CD8-positive, alpha-beta T cell (primary cell): ENCODE measurements at regions of chr12 and their contacts with region 1.

Region 1: DNA sequence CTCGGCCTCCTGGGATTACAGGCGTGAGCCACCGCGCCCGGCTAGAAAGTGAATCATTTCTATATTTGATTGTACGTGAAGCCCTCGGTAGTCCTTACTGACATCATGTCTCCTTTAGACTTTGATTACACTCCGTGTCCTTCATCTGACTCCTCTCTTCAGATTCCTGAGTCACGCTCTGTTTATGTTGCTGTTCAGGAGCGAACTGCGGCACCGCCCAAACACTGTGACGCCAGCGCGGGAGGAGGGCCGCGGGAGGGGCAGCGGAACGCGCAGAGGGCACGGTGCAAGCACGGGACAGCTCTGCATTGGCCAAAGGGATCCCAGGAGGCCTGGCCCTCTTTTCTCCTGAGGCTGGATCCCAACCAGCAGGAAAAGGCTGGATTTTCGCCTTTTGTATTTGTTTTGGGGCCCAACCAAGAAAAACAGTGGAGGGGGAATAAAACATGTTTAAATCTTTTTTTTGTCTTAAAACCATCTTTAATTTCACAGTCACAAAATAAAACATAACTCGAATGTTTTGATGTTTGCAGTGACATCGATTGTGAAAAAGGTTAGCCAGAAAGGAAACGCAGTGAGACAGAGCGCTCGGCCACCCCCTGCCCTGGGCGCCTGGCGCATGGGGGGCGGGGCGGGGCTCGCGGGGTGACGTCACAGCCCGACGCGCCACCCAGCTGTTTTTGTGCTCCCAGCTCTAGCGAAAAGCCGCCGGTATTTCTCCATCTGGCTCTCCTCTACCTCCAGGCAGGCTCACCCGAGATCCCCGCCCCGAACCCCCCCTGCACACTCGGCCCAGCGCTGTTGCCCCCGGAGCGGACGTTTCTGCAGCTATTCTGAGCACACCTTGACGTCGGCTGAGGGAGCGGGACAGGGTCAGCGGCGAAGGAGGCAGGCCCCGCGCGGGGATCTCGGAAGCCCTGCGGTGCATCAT is at the start of gene GABARAPL1:
- DNase-seq: peak; percentile 76 to 94 (median 88)
- ATAC-seq: peak; percentile 69
- H3K4me3 ChIP-seq: peak within 1 kb of the TSS; percentile 75 to 93
- H3K4me3 Mint-ChIP-seq: peak within 1 kb of the TSS; percentile 91
- H3K27ac ChIP-seq: peak within 1 kb of the TSS; percentile 93 to 98
- H3K27ac Mint-ChIP-seq: peak within 1 kb of the TSS; percentile 97
- H3K4me1 ChIP-seq: peaks cover 19% of the 10 kb centered on the region
- H3K4me1 Mint-ChIP-seq: peaks cover 28% of the 10 kb centered on the region
- H3K27me3 ChIP-seq: no peaks in the 10 kb centered on the region
- H3K27me3 Mint-ChIP-seq: no peaks in the 10 kb centered on the region
- CTCF ChIP-seq: no peak
- total RNA-seq, gene GABARAPL1: 377 to 380 TPM

Region 2: GRCh38 chr12:9741726-9742125 is 470.7 kb before region 1 on chr12:
- CTCF ChIA-PET with region 1: no interaction called
- POLR2A ChIA-PET with region 1: no interaction called
- intact Hi-C with region 1: loop called (anchors 5 kb)
- DNase-seq: peak; percentile 44 to 95 (median 67)
- ATAC-seq: peak; percentile 59
- H3K4me3 ChIP-seq: peak overlapping the region; percentile 13 to 19
- H3K4me3 Mint-ChIP-seq: peak overlapping the region; percentile 77
- H3K27ac ChIP-seq: peak overlapping the region; percentile 63 to 68
- H3K27ac Mint-ChIP-seq: peak overlapping the region; percentile 97
- H3K4me1 ChIP-seq: peaks cover 60% of the 10 kb centered on the region
- H3K4me1 Mint-ChIP-seq: peaks cover 67% of the 10 kb centered on the region
- H3K27me3 ChIP-seq: no peaks in the 10 kb centered on the region
- H3K27me3 Mint-ChIP-seq: no peaks in the 10 kb centered on the region
- CTCF ChIP-seq: no peak

Region 3: GRCh38 chr12:9869307-9870161 is 342.9 kb before region 1 on chr12 and contains the start of gene CLEC2B:
- CTCF ChIA-PET with region 1: no interaction called
- POLR2A ChIA-PET with region 1: no interaction called
- intact Hi-C with region 1: loop called (anchors 2 to 5 kb)
- DNase-seq: peak in 3 of 9 experiments; percentile 50 to 86 (median 71)
- ATAC-seq: peak; percentile 70
- H3K4me3 ChIP-seq: peak within 1 kb of the TSS; percentile 41 to 64
- H3K4me3 Mint-ChIP-seq: peak within 1 kb of the TSS; percentile 89
- H3K27ac ChIP-seq: peak within 1 kb of the TSS; percentile 79 to 92
- H3K27ac Mint-ChIP-seq: peak within 1 kb of the TSS; percentile 96
- H3K4me1 ChIP-seq: peaks cover 7% of the 10 kb centered on the region
- H3K4me1 Mint-ChIP-seq: peaks cover 36% of the 10 kb centered on the region
- H3K27me3 ChIP-seq: no peaks in the 10 kb centered on the region
- H3K27me3 Mint-ChIP-seq: no peaks in the 10 kb centered on the region
- CTCF ChIP-seq: no peak
- total RNA-seq, gene CLEC2B: 141 to 145 TPM

Region 4: GRCh38 chr12:10372534-10372931 is 160.1 kb after region 1 on chr12:
- CTCF ChIA-PET with region 1: no interaction called
- POLR2A ChIA-PET with region 1: no interaction called
- intact Hi-C with region 1: no loop called
- DNase-seq: peak in 2 of 9 experiments; percentile 37 to 60
- ATAC-seq: peak; percentile 30
- H3K4me3 ChIP-seq: peak overlapping the region; percentile 12 to 17
- H3K4me3 Mint-ChIP-seq: peak overlapping the region; percentile 43
- H3K27ac ChIP-seq: peak overlapping the region in 1 of 2 experiments; percentile 65
- H3K27ac Mint-ChIP-seq: peak overlapping the region; percentile 83
- H3K4me1 ChIP-seq: peaks cover 92% of the 10 kb centered on the region
- H3K4me1 Mint-ChIP-seq: peaks cover 82% of the 10 kb centered on the region
- H3K27me3 ChIP-seq: no peaks in the 10 kb centered on the region
- H3K27me3 Mint-ChIP-seq: no peaks in the 10 kb centered on the region
- CTCF ChIP-seq: no peak

Region 5: GRCh38 chr12:10395390-10395998 is 183.0 kb after region 1 on chr12:
- CTCF ChIA-PET with region 1: no interaction called
- POLR2A ChIA-PET with region 1: no interaction called
- intact Hi-C with region 1: loop called in 1 of 2 experiments (anchors 5 kb)
- DNase-seq: peak in 3 of 9 experiments; percentile 32 to 89 (median 78)
- ATAC-seq: peak; percentile 66
- H3K4me3 ChIP-seq: peak overlapping the region; percentile 30 to 37
- H3K4me3 Mint-ChIP-seq: peak overlapping the region; percentile 63
- H3K27ac ChIP-seq: peak overlapping the region; percentile 95 to 97
- H3K27ac Mint-ChIP-seq: peak overlapping the region; percentile 96
- H3K4me1 ChIP-seq: peaks cover 88% of the 10 kb centered on the region
- H3K4me1 Mint-ChIP-seq: peaks cover 68% of the 10 kb centered on the region
- H3K27me3 ChIP-seq: no peaks in the 10 kb centered on the region
- H3K27me3 Mint-ChIP-seq: no peaks in the 10 kb centered on the region
- CTCF ChIP-seq: no peak

Region 6: GRCh38 chr12:10554228-10554755 is 341.8 kb after region 1 on chr12:
- CTCF ChIA-PET with region 1: interaction called, 3 read pairs
- POLR2A ChIA-PET with region 1: interaction called, 3 read pairs
- intact Hi-C with region 1: loop called (anchors 1 kb)
- DNase-seq: peak in 8 of 9 experiments; percentile 29 to 85 (median 70)
- ATAC-seq: peak; percentile 64
- H3K4me3 ChIP-seq: peak overlapping the region; percentile 61 to 64
- H3K4me3 Mint-ChIP-seq: peak overlapping the region; percentile 90
- H3K27ac ChIP-seq: peak overlapping the region; percentile 80 to 95
- H3K27ac Mint-ChIP-seq: peak overlapping the region; percentile 100
- H3K4me1 ChIP-seq: peaks cover 32% of the 10 kb centered on the region
- H3K4me1 Mint-ChIP-seq: peaks cover 61% of the 10 kb centered on the region
- H3K27me3 ChIP-seq: no peaks in the 10 kb centered on the region
- H3K27me3 Mint-ChIP-seq: no peaks in the 10 kb centered on the region
- CTCF ChIP-seq: no peak

Region 7: DNA sequence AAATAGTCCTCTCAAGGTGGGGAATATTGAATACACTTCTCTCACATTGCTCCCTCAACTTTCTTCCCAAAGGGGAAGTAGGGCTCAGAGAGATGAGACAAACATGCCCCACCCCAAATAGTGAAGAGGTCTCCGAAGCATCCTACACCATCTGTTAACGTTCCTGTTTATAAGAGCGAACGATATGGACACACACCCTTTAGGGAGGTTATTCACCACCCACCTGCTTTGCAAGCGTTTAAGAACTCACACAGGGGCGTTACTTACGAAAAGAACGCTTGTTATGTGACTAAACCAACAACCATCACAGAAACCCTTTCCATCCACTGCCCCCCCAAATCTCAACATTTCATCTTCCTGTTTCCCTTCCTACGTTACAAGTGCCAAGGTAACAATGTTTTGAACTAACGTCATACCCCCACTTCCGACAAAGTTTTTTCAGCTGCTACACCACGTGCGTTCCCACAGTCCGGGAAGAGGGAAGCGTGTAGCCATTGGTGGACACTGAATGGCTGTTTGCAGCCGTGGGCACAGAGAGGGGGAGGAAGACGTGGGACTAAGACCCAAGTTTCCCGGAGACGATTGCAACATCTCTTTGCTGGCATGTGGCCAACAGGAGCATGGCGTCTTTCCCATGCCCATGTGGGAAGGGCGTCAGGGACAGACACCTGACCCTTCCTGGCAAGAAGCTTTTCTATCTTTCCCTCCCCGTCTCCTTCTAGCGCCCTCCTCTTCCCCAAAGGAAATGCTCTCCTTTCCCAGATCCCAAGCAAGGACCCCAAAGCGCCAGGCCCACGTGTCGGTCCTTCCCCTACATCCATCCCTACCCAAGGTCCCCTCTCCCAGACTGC is 509.4 kb after region 1 on chr12:
- CTCF ChIA-PET with region 1: no interaction called
- POLR2A ChIA-PET with region 1: no interaction called
- intact Hi-C with region 1: loop called in 1 of 2 experiments (anchors 2 kb)
- DNase-seq: peak; percentile 26 to 96 (median 63)
- ATAC-seq: peak; percentile 75
- H3K4me3 ChIP-seq: peak overlapping the region; percentile 69 to 72
- H3K4me3 Mint-ChIP-seq: peak overlapping the region; percentile 91
- H3K27ac ChIP-seq: peak overlapping the region; percentile 86 to 94
- H3K27ac Mint-ChIP-seq: peak overlapping the region; percentile 93
- H3K4me1 ChIP-seq: peaks cover 25% of the 10 kb centered on the region
- H3K4me1 Mint-ChIP-seq: peaks cover 50% of the 10 kb centered on the region
- H3K27me3 ChIP-seq: peaks cover 0 to 6% of the 10 kb centered on the region in 2 experiments
- H3K27me3 Mint-ChIP-seq: peaks cover 15% of the 10 kb centered on the region
- CTCF ChIP-seq: no peak